ENCODE measurements at regions of chr9 and their contacts with region 1.

Region 1: GRCh38 chr9:2179567-2179966 is 164.4 kb downstream of the SMARCA2 start:
- DNase-seq: no peak
- H3K4me3 ChIP-seq: no peak overlapping the region
- H3K4me3 Mint-ChIP-seq: no peak overlapping the region
- H3K27ac Mint-ChIP-seq: no peak overlapping the region
- H3K4me1 ChIP-seq: no peaks in the 10 kb centered on the region
- H3K4me1 Mint-ChIP-seq: no peaks in the 10 kb centered on the region
- H3K27me3 ChIP-seq: no peaks in the 10 kb centered on the region
- H3K27me3 Mint-ChIP-seq: no peaks in the 10 kb centered on the region
- CTCF ChIP-seq: no peak

Region 2: DNA sequence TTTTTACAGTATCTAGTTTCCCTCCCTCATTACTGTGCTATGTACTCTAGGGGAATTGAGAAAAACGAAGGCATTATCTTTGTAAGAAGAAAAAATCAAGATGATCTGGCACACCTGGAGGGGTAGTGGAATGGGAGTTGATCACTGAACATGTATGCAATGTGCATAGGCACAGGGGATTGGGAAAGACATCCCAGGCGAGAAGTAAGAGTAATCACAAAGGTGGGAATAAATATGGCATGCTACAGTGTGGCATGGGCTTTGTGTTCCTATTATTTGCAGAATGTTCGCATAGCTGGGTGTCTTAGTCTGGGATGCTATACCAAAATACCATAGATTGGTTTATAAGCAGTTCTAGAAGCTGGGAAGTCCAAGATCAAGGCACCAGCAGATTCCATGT is 33.8 kb before region 1 on chr9:
- CTCF ChIA-PET with region 1: no interaction called
- POLR2A ChIA-PET with region 1: no interaction called
- intact Hi-C with region 1: loop called (anchors 1 kb)
- DNase-seq: no peak
- H3K4me3 ChIP-seq: no peak overlapping the region
- H3K4me3 Mint-ChIP-seq: no peak overlapping the region
- H3K27ac Mint-ChIP-seq: no peak overlapping the region
- H3K4me1 ChIP-seq: no peaks in the 10 kb centered on the region
- H3K4me1 Mint-ChIP-seq: no peaks in the 10 kb centered on the region
- H3K27me3 ChIP-seq: no peaks in the 10 kb centered on the region
- H3K27me3 Mint-ChIP-seq: peaks cover 10% of the 10 kb centered on the region
- CTCF ChIP-seq: no peak

Measured in Caco-2 (cell line).